Activated CD4-positive, alpha-beta T cell treated with anti-CD3 and anti-CD28 coated beads for 36 hours (primary cell): ENCODE measurements at regions of chr15 and their contacts with region 1.

Region 1: GRCh38 chr15:51776952-51777574 is 25.7 kb downstream of the TMOD2 start:
- DNase-seq: peak; percentile 73
- ATAC-seq: peak; percentile 87
- H3K4me3 Mint-ChIP-seq: no peak overlapping the region
- H3K27ac Mint-ChIP-seq: no peak overlapping the region
- H3K4me1 Mint-ChIP-seq: peaks cover 3% of the 10 kb centered on the region
- H3K27me3 Mint-ChIP-seq: no peaks in the 10 kb centered on the region

Region 2: GRCh38 chr15:51162865-51163762 is 613.9 kb before region 1 on chr15:
- CTCF ChIA-PET with region 1: interaction called, 3 read pairs
- POLR2A ChIA-PET with region 1: no interaction called
- intact Hi-C with region 1: loop called in 1 of 2 experiments (anchors 2 kb)
- DNase-seq: peak; percentile 82
- ATAC-seq: peak; percentile 93
- H3K4me3 Mint-ChIP-seq: no peak overlapping the region
- H3K27ac Mint-ChIP-seq: no peak overlapping the region
- H3K4me1 Mint-ChIP-seq: peaks cover 9% of the 10 kb centered on the region
- H3K27me3 Mint-ChIP-seq: peaks cover 20% of the 10 kb centered on the region

Region 3: DNA sequence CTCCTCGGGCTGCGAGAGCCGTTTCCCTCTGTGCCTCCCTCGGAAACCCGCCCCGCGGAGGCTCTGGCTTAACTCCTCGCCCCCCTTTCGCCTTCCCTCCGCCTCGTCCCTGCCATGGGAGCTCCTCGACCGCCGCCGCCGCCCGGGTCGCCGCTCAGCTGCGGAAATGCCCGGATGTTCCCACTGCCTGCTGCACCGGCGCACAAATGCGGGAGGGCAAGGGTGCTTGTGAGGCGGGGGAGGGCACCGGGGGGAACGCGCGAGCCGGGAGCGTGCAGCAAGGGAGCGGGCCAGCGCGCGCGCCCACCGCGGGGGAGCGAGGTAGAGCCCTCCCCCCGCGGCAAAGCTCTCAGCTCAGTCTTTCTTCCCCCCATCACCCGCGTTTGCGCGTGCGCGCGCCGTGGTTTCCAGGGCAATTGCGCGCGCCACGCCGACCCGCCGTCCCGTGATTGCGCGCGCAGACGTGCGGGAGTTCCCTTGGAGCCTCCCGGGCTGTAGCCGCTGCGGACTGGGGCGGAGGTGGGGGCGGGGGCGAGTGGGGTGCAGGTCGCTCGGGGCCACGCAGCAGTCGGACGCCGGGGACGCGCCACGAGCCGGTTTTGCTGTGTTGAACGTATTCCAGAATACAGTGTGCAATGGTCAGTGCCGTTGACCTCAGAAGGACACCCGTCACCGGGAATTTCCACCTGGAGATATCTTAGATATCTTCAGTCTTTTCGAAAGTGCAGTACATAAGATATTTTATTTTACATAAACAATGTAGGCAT is 154.3 kb before region 1 on chr15 and contains the start of gene DMXL2:
- CTCF ChIA-PET with region 1: interaction called, 28 read pairs
- POLR2A ChIA-PET with region 1: no interaction called
- intact Hi-C with region 1: loop called in 1 of 2 experiments (anchors 1 kb)
- DNase-seq: peak; percentile 85
- ATAC-seq: peak; percentile 72
- H3K4me3 Mint-ChIP-seq: peak within 1 kb of the TSS; percentile 83
- H3K27ac Mint-ChIP-seq: peak within 1 kb of the TSS; percentile 58
- H3K4me1 Mint-ChIP-seq: peaks cover 21% of the 10 kb centered on the region
- H3K27me3 Mint-ChIP-seq: peaks cover 17% of the 10 kb centered on the region
- total RNA-seq, gene DMXL2: 5.9 to 7.0 TPM

Region 4: GRCh38 chr15:51634591-51635198 is 142.4 kb before region 1 on chr15:
- CTCF ChIA-PET with region 1: interaction called, 13 read pairs
- POLR2A ChIA-PET with region 1: no interaction called
- intact Hi-C with region 1: no loop called
- DNase-seq: peak; percentile 23
- ATAC-seq: peak; percentile 66
- H3K4me3 Mint-ChIP-seq: no peak overlapping the region
- H3K27ac Mint-ChIP-seq: no peak overlapping the region
- H3K4me1 Mint-ChIP-seq: peaks cover 5% of the 10 kb centered on the region
- H3K27me3 Mint-ChIP-seq: peaks cover 5% of the 10 kb centered on the region

Region 5: DNA sequence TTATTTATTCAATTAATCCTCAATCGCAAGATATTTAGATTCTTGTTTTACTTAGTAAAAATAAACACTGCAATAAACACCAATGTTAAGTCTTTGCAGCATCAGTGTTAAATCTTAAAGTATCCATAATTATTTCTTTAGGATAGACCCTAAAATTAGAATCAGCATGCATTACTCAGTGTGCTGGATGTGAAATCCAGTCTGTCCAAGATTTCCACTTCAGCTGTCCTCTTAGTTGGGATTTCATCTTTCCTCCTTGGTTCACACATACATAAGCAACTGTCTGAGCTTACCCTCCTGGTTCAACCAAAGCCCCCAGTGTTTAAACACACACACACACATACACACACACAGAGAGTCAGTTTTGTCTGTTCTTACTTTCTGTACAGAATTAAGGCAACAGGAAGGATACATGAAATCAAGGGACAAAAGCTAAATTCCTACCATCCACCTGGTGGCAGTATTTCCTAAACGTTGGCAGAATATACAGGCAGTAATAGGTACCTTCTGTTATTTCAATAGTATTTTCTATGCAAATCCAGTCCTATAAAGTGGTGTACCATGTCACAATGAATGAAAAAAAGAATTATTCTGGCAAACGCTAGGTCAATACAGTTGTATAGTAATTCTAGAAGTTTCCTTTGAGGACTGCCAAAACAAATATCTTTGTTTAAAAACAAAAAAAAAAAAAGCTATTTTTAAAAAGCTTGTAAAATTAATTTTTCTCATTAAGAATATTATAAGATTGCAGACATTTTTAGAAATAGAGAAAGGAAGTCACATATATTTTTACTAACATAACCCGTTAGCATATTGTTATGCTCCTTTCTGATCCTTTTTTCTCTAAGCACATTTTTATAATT is 127.2 kb before region 1 on chr15:
- CTCF ChIA-PET with region 1: interaction called, 285 read pairs
- POLR2A ChIA-PET with region 1: interaction called, 9 read pairs
- intact Hi-C with region 1: loop called (anchors 1 kb)
- DNase-seq: peak; percentile 44
- ATAC-seq: peak; percentile 74
- H3K4me3 Mint-ChIP-seq: no peak overlapping the region
- H3K27ac Mint-ChIP-seq: no peak overlapping the region
- H3K4me1 Mint-ChIP-seq: no peaks in the 10 kb centered on the region
- H3K27me3 Mint-ChIP-seq: no peaks in the 10 kb centered on the region

Region 6: DNA sequence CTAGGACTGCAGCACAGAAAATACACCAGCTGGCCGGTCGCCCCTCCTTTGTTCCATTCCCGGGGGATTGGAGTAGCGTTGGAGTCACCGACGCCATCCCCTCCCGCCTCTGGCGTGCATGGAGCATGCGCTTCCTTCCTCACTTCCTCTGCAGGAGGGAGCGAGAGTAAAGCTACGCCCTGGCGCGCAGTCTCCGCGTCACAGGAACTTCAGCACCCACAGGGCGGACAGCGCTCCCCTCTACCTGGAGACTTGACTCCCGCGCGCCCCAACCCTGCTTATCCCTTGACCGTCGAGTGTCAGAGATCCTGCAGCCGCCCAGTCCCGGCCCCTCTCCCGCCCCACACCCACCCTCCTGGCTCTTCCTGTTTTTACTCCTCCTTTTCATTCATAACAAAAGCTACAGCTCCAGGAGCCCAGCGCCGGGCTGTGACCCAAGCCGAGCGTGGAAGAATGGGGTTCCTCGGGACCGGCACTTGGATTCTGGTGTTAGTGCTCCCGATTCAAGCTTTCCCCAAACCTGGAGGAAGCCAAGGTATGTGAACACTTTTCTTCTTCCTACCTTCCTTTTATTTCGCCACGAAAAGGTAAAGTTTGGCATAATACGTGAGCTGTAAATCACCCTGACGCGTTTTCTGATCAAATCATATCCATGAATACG is 95.6 kb before region 1 on chr15 and contains the start of gene SCG3:
- CTCF ChIA-PET with region 1: interaction called, 22 read pairs
- POLR2A ChIA-PET with region 1: no interaction called
- intact Hi-C with region 1: no loop called
- DNase-seq: peak; percentile 84
- ATAC-seq: peak; percentile 73
- H3K4me3 Mint-ChIP-seq: peak within 1 kb of the TSS; percentile 21
- H3K27ac Mint-ChIP-seq: no peak within 1 kb of the TSS
- H3K4me1 Mint-ChIP-seq: peaks cover 7% of the 10 kb centered on the region
- H3K27me3 Mint-ChIP-seq: peaks cover 25% of the 10 kb centered on the region
- total RNA-seq, gene SCG3: not detected